ENCODE measurements at regions of chr18 and their contacts with region 1.

Region 1: GRCh38 chr18:22223254-22223960 is 54.0 kb downstream of the GATA6 start:
- DNase-seq: peak; percentile 78 to 95
- H3K4me3 ChIP-seq: no peak overlapping the region
- H3K27ac ChIP-seq: no peak overlapping the region
- H3K4me1 ChIP-seq: peaks cover 2% of the 10 kb centered on the region in 2 donors
- H3K27me3 ChIP-seq: no peaks in the 10 kb centered on the region
- CTCF ChIP-seq: no peak

Region 2: DNA sequence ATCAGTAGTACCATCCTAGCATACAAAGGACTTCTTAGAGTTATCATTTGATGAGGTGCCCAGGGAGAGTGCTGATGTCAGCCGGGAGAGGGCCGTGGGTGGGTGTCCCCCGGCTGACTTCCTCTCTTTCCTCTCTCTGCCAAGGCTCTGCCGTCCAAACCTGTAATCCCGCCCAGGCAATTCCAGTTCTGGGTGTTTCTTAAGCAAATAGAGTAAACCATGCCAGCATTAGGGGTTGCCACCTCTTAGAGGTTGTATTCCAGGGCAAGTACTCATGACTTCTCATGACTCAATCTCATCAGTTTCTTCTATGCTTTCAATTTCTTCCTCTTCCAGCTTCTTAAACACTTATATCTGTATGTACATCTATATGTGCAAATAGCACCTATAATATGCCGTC is 63.2 kb after region 1 on chr18:
- intact Hi-C with region 1: loop called (anchors 5 kb)
- DNase-seq: peak in 1 of 2 donors; percentile 79
- H3K4me3 ChIP-seq: peak overlapping the region; percentile 18 to 35
- H3K27ac ChIP-seq: peak overlapping the region; percentile 19 to 35
- H3K4me1 ChIP-seq: peaks cover 0 to 4% of the 10 kb centered on the region in 2 donors
- H3K27me3 ChIP-seq: no peaks in the 10 kb centered on the region
- CTCF ChIP-seq: no peak

Region 3: GRCh38 chr18:22639026-22639463 is 415.6 kb after region 1 on chr18:
- intact Hi-C with region 1: no loop called
- DNase-seq: no peak
- H3K4me3 ChIP-seq: no peak overlapping the region
- H3K27ac ChIP-seq: no peak overlapping the region
- H3K4me1 ChIP-seq: peaks cover 0 to 4% of the 10 kb centered on the region in 2 donors
- H3K27me3 ChIP-seq: no peaks in the 10 kb centered on the region
- CTCF ChIP-seq: no peak

Region 4: DNA sequence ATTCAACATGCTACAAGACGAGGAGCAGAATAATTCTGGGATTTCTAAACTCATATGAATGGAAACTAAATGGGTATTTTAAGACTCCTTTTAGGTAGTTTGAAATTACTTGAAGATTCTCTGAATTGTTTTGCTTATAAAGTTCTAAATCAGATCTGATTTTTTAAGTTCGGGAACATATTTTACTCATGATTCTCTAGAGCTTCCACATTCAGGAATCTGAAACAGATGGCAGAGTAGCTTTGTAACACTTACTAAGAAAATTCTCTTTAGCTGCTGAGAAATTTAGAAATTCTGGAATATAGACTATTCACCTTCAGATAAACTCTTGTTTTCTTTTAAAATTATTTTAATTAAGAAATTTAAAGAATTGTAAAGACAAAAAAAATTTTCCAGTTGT is 723.4 kb after region 1 on chr18:
- intact Hi-C with region 1: no loop called
- DNase-seq: no peak
- H3K4me3 ChIP-seq: no peak overlapping the region
- H3K27ac ChIP-seq: no peak overlapping the region
- H3K4me1 ChIP-seq: no peaks in the 10 kb centered on the region
- H3K27me3 ChIP-seq: no peaks in the 10 kb centered on the region
- CTCF ChIP-seq: no peak